Naive thymus-derived CD4-positive, alpha-beta T cell (primary cell): ENCODE measurements at regions of chr2 and their contacts with region 1.

Region 1: DNA sequence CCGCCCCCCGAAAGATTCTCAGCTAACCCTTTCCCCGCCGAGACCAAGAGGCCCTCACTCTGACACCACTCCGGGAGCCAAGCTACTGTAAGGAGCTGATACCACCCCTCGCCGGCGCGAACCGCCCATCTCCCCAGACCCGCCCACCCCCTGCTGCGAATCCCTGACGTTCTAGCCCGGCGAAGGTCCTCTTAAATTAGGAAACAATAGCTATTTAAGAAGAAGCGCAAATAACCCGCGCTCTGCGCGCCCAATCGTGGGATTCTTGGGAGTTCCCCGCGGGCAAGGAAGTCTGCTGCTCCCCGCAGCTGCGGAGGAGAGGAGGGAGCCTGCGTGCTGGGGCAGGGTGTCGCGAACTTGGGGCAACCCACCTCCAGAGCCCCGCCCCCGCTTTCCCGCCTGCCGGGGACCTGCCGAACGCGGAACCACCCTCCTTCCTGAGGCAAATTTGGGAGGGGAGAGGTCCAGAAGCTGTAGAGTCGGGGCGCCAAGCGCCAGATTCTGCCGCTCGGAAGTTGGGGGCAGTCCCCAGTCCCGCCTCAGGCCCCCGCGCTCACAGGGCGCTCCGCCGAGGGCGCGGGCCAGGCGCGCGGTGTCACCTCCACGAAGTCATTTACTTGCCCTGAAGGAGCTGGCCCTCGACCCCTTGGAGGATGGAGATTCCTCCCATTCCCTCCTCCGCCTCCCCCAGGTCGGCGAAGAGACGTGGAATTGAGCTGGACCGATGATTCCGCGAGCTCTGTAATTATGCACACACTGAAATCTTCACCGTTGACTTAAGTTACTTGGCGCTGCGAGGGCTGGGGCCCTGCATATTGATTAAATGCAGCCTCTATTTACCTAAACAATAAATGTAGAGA is 8.4 kb upstream of the SP9 start:
- DNase-seq: peak in 4 of 9 donors; percentile 24 to 52 (median 32)
- ATAC-seq: peak; percentile 43
- H3K4me3 ChIP-seq: peak overlapping the region; percentile 31
- H3K4me3 Mint-ChIP-seq: peak overlapping the region; percentile 75 to 86 (median 82)
- H3K27ac ChIP-seq: no peak overlapping the region
- H3K27ac Mint-ChIP-seq: peak overlapping the region in 3 of 9 donors; percentile 1 to 39 (median 4)
- H3K4me1 ChIP-seq: peaks cover 13 to 15% of the 10 kb centered on the region in 2 donors
- H3K4me1 Mint-ChIP-seq: peaks cover 15 to 37% (median 23%) of the 10 kb centered on the region in 7 donors
- H3K27me3 ChIP-seq: peaks cover 45 to 55% of the 10 kb centered on the region in 2 donors
- H3K27me3 Mint-ChIP-seq: peaks cover 85 to 95% (median 86%) of the 10 kb centered on the region in 5 donors

Region 2: GRCh38 chr2:172507199-172507598 is 1819.2 kb before region 1 on chr2:
- CTCF ChIA-PET with region 1: no interaction called
- POLR2A ChIA-PET with region 1: no interaction called
- intact Hi-C with region 1: loop called in 1 of 2 experiments (anchors 5 kb)
- DNase-seq: no peak
- ATAC-seq: no peak
- H3K4me3 ChIP-seq: no peak overlapping the region
- H3K4me3 Mint-ChIP-seq: no peak overlapping the region
- H3K27ac ChIP-seq: no peak overlapping the region
- H3K27ac Mint-ChIP-seq: peak overlapping the region in 7 of 9 donors; percentile 56 to 92 (median 76)
- H3K4me1 ChIP-seq: peaks cover 0 to 20% of the 10 kb centered on the region in 2 donors
- H3K4me1 Mint-ChIP-seq: peaks cover 11 to 86% (median 81%) of the 10 kb centered on the region in 7 donors
- H3K27me3 ChIP-seq: no peaks in the 10 kb centered on the region
- H3K27me3 Mint-ChIP-seq: no peaks in the 10 kb centered on the region

Region 3: DNA sequence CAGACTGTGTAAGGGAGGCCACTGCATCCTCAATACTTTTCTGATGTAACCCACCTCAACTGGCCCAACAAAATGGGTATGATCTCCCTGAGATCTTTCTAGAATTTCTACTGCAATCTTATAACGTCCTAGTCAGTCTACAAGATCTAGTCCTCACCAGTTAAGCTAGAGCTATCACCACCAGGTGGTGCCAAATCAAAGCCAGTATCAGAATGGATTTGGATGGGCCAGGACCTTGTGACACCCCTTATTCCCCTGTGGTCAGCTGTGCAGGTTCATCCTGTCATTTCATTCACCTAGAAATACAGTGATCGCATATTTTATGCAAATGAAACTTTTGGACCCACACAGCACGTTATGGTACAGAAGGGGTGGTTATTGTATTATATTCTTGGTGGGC is 168.4 kb before region 1 on chr2:
- CTCF ChIA-PET with region 1: no interaction called
- POLR2A ChIA-PET with region 1: no interaction called
- intact Hi-C with region 1: loop called in 1 of 2 experiments (anchors 5 kb)
- DNase-seq: peak in 4 of 9 donors; percentile 1 to 18 (median 10)
- ATAC-seq: peak; percentile 40
- H3K4me3 ChIP-seq: no peak overlapping the region
- H3K4me3 Mint-ChIP-seq: no peak overlapping the region
- H3K27ac ChIP-seq: no peak overlapping the region
- H3K27ac Mint-ChIP-seq: no peak overlapping the region
- H3K4me1 ChIP-seq: no peaks in the 10 kb centered on the region
- H3K4me1 Mint-ChIP-seq: peaks cover 0 to 13% (median 10%) of the 10 kb centered on the region in 7 donors
- H3K27me3 ChIP-seq: no peaks in the 10 kb centered on the region
- H3K27me3 Mint-ChIP-seq: no peaks in the 10 kb centered on the region